ENCODE measurements at regions of chr12 and their contacts with region 1.

Region 1: DNA sequence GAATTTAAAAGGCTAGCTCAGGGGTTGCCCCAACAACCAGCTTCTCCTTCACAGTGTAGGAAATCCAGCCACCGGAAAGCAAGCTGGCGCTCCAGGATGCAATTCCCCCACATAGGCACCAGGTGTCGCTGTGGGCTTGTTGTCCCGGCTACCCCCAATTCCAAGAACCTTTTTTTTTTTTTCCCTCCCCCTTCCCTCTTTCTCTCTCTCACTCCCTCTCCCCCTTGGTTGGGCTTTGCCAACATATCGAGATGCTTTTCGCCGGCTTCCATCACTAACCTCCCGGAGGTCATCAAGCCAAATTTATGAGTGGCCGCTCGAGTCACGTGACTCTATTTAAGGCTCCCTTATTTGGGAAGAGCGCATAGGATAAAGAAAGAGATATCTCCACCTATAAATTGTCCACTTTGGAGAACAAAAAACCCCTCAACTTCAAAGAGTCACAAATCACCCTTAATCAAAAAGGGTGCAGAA is at the start of gene HOXC5:
- DNase-seq: peak; percentile 37
- H3K4me3 ChIP-seq: no peak within 1 kb of the TSS
- H3K27ac ChIP-seq: no peak within 1 kb of the TSS
- H3K4me1 ChIP-seq: no peaks in the 10 kb centered on the region
- H3K27me3 ChIP-seq: peaks cover 79 to 88% of the 10 kb centered on the region in 2 experiments
- CTCF ChIP-seq: peak; percentile 79 to 81
- POLR2A ChIP-seq: no peak
- total RNA-seq, gene HOXC5: not detected in 2 replicates

Region 2: DNA sequence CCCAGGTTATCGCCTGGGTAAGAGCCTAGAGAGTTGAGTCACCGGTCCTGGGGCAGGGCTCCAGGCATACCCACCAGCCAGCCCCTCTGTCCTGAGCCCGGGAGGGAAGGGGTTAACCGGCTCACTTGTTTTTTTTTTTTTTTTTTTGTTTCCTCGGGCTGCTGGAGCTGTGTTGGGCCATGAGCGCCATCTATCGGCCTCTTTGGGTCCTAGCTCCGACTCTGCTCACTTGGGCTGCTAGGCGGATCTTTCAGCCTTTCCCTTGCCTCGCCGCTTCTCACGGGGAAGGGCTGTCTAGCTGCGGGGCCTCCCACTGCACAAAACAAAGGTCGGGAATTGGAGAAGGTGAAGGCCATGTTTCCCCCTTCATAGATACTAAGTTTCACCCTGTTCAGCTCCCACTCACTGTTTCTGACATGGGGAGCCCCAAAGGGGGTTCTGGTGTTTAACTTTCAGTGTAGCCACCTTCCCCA is 158.9 kb after region 1 on chr12:
- CTCF ChIA-PET with region 1: interaction called, 57 read pairs
- POLR2A ChIA-PET with region 1: no interaction called
- dilution Hi-C with region 1: no loop called
- intact Hi-C with region 1: loop called (anchors 1 kb)
- DNase-seq: peak; percentile 75
- H3K4me3 ChIP-seq: no peak overlapping the region
- H3K27ac ChIP-seq: no peak overlapping the region
- H3K4me1 ChIP-seq: no peaks in the 10 kb centered on the region
- H3K27me3 ChIP-seq: peaks cover 30 to 33% of the 10 kb centered on the region in 2 experiments
- CTCF ChIP-seq: peak; percentile 75 to 94
- POLR2A ChIP-seq: no peak